ENCODE measurements at regions of chr3 and their contacts with region 1.

Region 1: GRCh38 chr3:149657926-149658733 is at the start of gene WWTR1:
- DNase-seq: peak; percentile 92 to 96
- ATAC-seq: peak; percentile 80 to 87
- H3K4me3 ChIP-seq: peak within 1 kb of the TSS; percentile 90
- H3K27ac ChIP-seq: peak within 1 kb of the TSS; percentile 99
- H3K4me1 ChIP-seq: peaks cover 57% of the 10 kb centered on the region
- CTCF ChIP-seq: no peak
- EP300 ChIP-seq: no peak
- POLR2A ChIP-seq: peak; percentile 66
- RAD21 ChIP-seq: peak; percentile 1 to 27; a peak in 1 of 5 replicates
- polyA plus RNA-seq, gene WWTR1: 164 and 216 TPM in 2 replicates

Region 2: DNA sequence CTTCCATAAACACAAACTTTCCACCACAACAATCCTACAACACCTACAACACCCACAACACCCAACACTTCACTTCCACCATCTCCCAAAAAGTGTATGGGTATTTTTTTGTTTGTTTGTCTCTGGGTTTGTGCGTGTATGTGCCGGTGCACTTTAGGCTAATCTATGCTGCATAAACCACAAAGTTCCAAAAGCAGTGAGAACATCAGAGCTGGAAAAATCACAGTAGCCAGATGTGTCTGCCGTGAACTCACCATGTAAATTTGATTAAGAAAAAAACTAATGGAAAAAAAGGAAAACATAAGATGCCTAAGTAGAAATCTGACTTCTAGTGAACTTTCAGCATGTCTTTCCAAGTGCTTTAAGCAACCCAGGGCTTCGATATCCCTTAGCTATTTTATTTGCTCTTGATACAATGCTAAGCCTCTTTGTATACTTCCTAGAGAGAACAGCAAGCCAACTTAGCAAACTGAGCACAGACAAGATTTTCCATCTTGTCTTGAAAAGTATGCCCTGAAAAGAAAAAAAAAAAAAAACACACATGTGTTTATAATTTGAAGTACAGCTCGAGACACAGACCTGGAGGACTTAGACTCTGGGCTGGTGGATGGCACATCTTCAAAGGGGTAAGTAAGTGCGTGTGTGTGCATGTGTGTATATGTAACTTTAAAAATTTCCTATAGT is 91.7 kb before region 1 on chr3:
- CTCF ChIA-PET with region 1: interaction called, 25 read pairs
- POLR2A ChIA-PET with region 1: interaction called, 23 read pairs
- DNase-seq: no peak
- ATAC-seq: peak in 1 of 2 experiments; percentile 28; a peak in 1 of 6 replicates
- H3K4me3 ChIP-seq: no peak overlapping the region
- H3K27ac ChIP-seq: peak overlapping the region; percentile 24 to 74
- H3K4me1 ChIP-seq: peaks cover 76% of the 10 kb centered on the region
- CTCF ChIP-seq: no peak
- EP300 ChIP-seq: no peak
- POLR2A ChIP-seq: no peak
- RAD21 ChIP-seq: no peak

Region 3: DNA sequence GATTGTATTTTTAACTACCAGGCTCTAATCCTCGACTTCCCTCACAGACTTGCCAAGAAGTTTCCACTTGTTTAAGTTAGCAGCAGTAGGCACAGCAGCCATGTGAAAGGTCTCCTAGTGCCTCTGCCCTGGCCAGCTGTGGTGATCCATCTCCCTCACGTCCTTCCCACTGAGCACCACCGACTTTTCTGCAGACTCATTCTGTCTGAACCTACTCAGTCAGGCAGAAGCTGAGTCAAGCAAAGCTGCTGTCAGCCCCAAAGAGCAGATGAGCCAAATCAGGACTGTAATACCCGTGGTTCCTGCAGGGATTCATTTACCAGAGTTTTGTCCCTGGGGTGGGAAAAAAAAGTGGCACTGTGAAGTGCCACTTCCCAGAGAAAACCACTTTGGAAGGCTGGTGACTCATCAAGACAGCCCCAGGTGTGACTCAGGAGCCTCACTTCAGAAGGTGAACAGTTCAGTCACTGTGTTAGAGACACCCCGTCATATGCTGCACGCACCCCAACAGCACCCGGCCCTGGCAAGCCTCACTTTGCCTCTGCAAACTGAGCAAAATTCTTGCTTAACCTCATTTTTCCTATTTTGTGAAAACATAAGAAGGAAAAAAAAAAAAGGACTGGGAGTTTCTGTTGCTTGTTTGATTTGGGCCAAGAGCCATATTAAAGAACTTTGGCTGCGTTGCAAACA is 76.3 kb before region 1 on chr3:
- CTCF ChIA-PET with region 1: interaction called, 6 read pairs
- POLR2A ChIA-PET with region 1: interaction called, 27 read pairs
- DNase-seq: peak; percentile 83 to 86
- ATAC-seq: peak; percentile 90 to 95
- H3K4me3 ChIP-seq: peak overlapping the region; percentile 18; the same call in 1 of the 3 replicates
- H3K27ac ChIP-seq: peak overlapping the region; percentile 94
- H3K4me1 ChIP-seq: peaks cover 100% of the 10 kb centered on the region
- CTCF ChIP-seq: no peak
- EP300 ChIP-seq: peak; percentile 30 to 36; a peak in 2 of 5 replicates
- POLR2A ChIP-seq: 0 out of 2 replicates have a peak, but pooled peaks have one; percentile 9
- RAD21 ChIP-seq: no peak; a peak in 1 of 5 replicates

Region 4: GRCh38 chr3:149603126-149604074 is 54.7 kb before region 1 on chr3:
- CTCF ChIA-PET with region 1: interaction called, 4 read pairs
- POLR2A ChIA-PET with region 1: interaction called, 31 read pairs
- DNase-seq: peak; percentile 60 to 64
- ATAC-seq: peak in 1 of 2 experiments; percentile 53; a peak in 3 of 6 replicates
- H3K4me3 ChIP-seq: no peak overlapping the region
- H3K27ac ChIP-seq: peak overlapping the region; percentile 84 to 89
- H3K4me1 ChIP-seq: peaks cover 98% of the 10 kb centered on the region
- CTCF ChIP-seq: no peak
- EP300 ChIP-seq: peak; percentile 20 to 26; a peak in 1 of 5 replicates
- POLR2A ChIP-seq: no peak
- RAD21 ChIP-seq: no peak

Region 5: DNA sequence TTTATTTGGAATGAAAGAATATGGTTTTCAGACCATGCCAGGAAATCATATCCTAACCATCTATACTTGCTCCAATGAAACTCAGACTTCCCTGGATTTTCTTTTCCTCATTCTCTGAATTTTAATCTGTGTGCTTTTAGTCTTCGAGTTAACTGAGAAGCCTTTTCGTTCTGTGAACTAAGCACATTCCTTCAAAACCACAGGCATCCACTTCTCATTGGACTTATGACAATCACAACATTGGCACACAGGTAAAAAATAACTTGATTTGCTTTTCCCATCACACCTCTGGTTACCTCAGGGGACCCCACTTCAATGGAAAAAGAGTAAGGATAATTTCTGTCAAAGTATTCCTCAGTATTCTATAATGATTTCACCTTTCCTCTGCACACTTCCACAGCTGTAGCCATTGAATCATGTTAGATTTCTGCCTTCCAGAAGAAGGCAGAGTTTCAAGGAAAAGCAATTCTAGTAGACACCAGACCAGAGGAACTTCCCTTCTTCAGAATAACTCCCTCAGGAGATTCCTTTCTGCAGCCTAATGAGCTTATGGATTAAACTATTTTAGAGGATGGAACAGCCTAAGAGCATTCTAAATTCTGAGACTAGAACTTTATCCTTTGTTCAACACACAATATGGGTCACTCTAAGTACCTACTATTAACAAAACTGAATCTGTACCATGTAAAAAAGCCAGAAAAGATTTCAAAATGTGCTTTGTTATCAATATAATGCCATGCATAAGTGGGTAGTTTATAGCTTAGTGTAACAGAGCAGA is 78.2 kb after region 1 on chr3:
- CTCF ChIA-PET with region 1: no interaction called
- POLR2A ChIA-PET with region 1: no interaction called
- DNase-seq: peak in 1 of 2 experiments; percentile 25
- ATAC-seq: no peak
- H3K4me3 ChIP-seq: no peak overlapping the region
- H3K27ac ChIP-seq: peak overlapping the region in 1 of 2 experiments; percentile 4; a peak in 1 of 6 replicates
- H3K4me1 ChIP-seq: peaks cover 7% of the 10 kb centered on the region; the same call in 1 of the 3 replicates
- CTCF ChIP-seq: no peak
- EP300 ChIP-seq: no peak
- POLR2A ChIP-seq: no peak
- RAD21 ChIP-seq: no peak